Activated T-helper 1 cell treated with anti-CD3 and anti-CD28 coated beads, Interleukin-12 subunit alpha, Interleukin-12 subunit beta, Interleukin-2, Interleukin-4 antibody, amounts not matched to agents 30 ng/mL and 10 ng/mL and 1 ng/mL, durations not matched to agents 14 hours and 24 hours and 36 hours (primary cell): ENCODE measurements at regions of chr10 and their contacts with region 1.

Region 1: DNA sequence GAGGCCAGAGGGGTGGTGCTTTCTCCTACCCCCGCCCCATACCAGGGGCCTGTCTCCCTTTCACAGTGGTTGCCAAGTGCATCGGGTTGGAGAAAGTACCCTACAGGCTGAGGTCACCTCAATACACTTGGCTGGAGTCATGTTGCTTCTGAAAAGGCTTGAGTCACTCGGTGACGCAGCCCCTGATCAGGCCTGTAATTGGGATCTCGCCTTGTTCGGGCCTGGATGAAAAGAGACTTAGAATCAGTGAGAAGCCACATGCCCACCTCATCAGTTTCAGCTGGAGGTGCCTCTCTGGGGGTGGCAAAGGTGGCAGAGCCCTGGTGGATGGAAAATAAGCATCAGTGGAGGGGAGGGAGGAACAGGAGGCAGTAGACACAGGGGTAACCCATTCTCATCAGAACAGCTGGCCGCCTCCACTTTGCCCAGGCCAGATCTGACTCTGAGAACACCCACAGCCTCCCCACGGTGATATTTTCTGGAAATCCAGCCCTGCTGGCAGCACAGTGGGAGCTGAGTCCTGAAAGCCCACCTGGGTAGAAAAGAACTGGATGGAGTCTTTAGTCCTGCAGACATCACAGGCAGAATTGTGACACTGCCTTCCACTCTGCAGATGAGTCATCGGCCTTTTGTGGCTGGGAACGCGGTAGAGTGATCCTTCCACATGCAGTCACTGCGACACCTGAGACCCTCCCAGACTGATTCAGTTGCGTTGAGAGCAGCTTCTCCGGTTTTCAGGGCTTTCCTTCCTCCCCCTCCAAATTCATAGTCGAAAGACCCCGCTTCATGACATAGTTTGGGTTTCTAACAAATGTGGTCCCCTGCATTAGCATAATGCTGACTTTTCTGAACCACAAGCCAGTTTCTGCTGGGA is 108.0 kb downstream of the GRK5 start:
- DNase-seq: peak; percentile 64
- H3K4me3 Mint-ChIP-seq: peak overlapping the region; percentile 62
- H3K27ac Mint-ChIP-seq: peak overlapping the region; percentile 95
- H3K4me1 Mint-ChIP-seq: peaks cover 64% of the 10 kb centered on the region
- H3K27me3 Mint-ChIP-seq: peaks cover 12% of the 10 kb centered on the region

Region 2: DNA sequence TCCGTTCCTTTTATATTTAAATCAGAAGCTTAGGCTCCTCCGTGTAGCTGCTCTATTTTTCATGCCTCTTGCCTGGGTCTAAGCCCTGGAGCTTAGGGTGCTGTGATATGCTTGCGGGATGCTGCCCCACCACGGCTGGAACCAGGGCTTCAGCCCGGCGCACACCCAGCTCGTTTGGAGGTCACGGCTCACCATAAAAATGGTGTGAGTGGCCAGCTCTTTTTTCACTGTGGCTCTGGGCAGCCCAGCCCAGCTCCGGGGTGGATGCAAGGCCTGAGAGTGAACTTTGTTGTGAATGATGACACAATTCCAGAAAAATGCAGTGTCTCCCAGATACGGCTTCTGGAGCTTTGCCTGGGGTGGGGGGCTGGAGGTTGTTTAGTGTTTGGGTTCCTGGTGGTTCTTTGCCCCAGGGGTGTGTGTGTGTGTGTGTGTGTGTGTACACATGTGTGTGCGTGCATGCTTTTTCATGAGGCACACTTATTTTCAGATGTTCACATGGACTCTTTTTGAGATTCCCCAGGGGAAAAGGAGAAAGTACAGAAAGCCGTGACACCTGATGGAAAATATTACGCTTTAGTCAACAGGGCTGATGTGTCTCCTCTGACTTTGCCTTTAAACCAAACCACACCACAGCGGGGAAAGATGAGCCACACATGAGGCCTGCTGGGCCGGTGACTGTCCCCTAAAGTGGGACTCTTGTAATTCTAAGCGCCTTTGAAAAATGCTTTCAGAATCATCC is 61.8 kb before region 1 on chr10:
- intact Hi-C with region 1: loop called (anchors 1 kb)
- DNase-seq: no peak
- H3K4me3 Mint-ChIP-seq: peak overlapping the region; percentile 15
- H3K27ac Mint-ChIP-seq: peak overlapping the region; percentile 88
- H3K4me1 Mint-ChIP-seq: peaks cover 63% of the 10 kb centered on the region
- H3K27me3 Mint-ChIP-seq: no peaks in the 10 kb centered on the region

Region 3: DNA sequence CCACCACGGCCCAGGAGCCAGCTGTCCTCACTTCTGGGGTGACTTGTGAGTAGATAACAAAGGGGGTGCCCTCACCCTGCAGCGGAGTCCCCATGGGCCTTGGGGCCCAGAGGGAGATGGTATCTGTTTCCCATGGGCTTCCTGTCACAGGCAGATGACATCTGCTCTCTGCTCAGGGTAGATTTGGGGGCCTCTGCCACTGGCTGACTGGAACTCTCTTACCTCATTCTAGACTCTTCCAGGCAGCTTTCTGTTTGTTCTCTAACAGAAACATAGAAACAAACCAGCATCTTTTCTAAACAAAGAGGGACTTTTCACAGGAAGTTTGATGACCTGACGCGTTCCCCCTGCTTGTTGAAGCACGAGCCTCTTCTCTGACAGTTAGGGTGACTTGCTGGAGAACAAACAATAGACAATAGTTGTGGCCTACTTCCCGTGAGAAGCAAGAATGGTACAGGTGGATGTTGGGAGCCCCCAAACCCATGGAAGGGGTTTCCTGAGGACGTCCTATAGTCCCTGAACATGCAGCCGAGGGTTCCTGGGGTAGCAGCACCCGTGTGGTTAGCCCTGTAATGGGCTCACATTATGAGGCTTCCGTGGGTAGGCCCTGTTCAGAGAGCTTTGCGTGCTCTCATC is 46.4 kb before region 1 on chr10:
- intact Hi-C with region 1: loop called (anchors 1 kb)
- DNase-seq: peak; percentile 85
- H3K4me3 Mint-ChIP-seq: peak overlapping the region; percentile 43
- H3K27ac Mint-ChIP-seq: peak overlapping the region; percentile 98
- H3K4me1 Mint-ChIP-seq: peaks cover 76% of the 10 kb centered on the region
- H3K27me3 Mint-ChIP-seq: no peaks in the 10 kb centered on the region

Region 4: DNA sequence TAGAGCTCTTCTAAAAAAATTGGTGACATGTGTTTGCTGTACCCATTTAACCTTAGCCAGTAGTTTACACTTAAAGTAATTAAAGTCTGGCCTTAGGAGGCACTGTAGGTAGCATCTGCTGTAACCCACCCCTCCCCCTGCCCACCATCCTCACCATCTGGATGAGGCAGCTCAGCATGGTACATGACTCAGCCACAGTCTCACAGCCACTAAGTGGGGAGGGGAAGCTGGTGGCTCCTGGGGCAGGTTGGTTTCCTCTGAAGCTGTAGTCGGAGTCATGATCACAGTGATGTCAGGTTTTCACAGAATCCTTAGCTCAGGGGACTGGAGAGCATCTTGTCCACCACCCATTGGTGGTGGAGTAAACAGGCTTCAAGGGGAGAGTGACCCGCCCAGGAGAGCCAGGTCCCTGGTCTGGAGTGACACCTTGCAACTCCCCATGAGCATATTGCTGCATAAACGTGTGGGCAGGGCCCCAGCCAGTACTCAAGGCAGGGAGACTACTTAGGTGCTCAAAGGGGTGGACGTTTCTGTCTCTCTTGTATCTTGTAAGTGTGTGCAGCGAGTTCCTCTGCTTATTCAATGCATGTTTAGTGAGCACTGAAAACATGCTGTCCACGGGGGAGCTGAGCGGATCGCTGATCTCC is 17.9 kb after region 1 on chr10:
- intact Hi-C with region 1: loop called (anchors 2 kb)
- DNase-seq: peak; percentile 28
- H3K4me3 Mint-ChIP-seq: no peak overlapping the region
- H3K27ac Mint-ChIP-seq: peak overlapping the region; percentile 18
- H3K4me1 Mint-ChIP-seq: peaks cover 20% of the 10 kb centered on the region
- H3K27me3 Mint-ChIP-seq: no peaks in the 10 kb centered on the region

Region 5: DNA sequence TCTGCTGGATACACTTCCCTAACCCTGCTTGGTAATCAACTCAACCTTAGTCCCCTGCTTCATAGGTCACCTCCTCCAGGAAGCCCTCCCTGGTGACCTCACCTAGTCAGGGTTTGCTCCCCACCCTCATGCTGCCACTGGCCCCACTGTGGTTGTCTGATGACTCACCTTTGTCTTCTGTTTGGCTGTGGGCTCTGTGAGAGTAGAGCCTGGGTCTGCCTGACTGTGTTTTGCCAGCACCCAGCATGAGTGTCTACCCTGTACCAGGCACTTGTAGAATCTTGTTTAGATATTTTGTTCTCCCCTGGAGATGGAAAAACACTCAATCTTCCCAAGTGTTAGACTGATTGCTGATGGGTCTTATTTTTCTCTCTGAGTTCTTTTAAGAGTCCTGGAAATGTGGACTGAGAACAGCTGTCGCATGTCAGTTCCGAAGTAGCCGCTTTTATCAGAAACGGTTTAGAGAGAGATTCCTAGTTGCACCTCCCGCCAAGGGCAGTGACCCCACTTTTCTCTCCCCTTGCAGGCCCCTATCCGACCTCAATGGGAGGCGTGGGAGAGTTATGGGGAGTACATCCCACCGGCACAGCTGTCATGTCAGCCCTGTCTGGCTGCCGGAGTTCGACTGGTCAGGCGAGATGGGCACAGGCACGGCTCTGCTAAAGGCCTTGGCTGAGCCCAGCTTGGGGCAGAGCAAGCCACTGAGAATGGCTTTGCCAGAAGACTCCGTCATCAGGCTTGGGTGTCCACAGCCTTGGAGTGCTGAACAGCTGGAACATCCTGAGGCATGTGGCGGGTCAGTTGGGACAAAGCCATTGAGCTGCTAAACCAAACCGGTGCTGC is 26.3 kb after region 1 on chr10:
- intact Hi-C with region 1: loop called (anchors 2 kb)
- DNase-seq: peak; percentile 25
- H3K4me3 Mint-ChIP-seq: no peak overlapping the region
- H3K27ac Mint-ChIP-seq: peak overlapping the region; percentile 68
- H3K4me1 Mint-ChIP-seq: peaks cover 43% of the 10 kb centered on the region
- H3K27me3 Mint-ChIP-seq: no peaks in the 10 kb centered on the region

Region 6: DNA sequence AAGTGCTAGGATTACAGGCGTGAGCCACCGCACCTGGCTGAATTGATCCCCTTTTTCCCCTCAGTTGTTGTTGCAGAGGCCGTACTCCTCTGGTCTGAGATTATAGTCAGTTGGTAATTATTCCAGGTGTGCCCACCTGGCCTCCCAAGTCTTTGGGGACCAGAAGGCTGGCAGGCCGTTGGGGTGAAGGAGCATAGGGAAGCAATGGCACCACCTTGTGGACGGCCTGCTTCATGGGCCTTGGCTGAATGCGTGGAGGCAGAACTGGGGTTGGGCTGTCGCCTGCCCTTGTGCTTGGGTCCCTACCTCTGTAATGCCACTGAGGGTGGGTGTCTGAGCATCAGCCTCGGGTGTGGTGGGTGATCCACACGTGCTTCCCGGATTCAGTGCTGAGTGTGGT is 101.5 kb after region 1 on chr10:
- intact Hi-C with region 1: loop called (anchors 1 kb)
- DNase-seq: peak; percentile 51
- H3K4me3 Mint-ChIP-seq: no peak overlapping the region
- H3K27ac Mint-ChIP-seq: no peak overlapping the region
- H3K4me1 Mint-ChIP-seq: no peaks in the 10 kb centered on the region
- H3K27me3 Mint-ChIP-seq: no peaks in the 10 kb centered on the region

Region 7: GRCh38 chr10:119496273-119496672 is 180.9 kb after region 1 on chr10:
- intact Hi-C with region 1: loop called (anchors 5 kb)
- DNase-seq: no peak
- H3K4me3 Mint-ChIP-seq: peak overlapping the region; percentile 64
- H3K27ac Mint-ChIP-seq: peak overlapping the region; percentile 87
- H3K4me1 Mint-ChIP-seq: peaks cover 79% of the 10 kb centered on the region
- H3K27me3 Mint-ChIP-seq: no peaks in the 10 kb centered on the region